ENCODE measurements at regions of chr9 and their contacts with region 1.

Region 1: DNA sequence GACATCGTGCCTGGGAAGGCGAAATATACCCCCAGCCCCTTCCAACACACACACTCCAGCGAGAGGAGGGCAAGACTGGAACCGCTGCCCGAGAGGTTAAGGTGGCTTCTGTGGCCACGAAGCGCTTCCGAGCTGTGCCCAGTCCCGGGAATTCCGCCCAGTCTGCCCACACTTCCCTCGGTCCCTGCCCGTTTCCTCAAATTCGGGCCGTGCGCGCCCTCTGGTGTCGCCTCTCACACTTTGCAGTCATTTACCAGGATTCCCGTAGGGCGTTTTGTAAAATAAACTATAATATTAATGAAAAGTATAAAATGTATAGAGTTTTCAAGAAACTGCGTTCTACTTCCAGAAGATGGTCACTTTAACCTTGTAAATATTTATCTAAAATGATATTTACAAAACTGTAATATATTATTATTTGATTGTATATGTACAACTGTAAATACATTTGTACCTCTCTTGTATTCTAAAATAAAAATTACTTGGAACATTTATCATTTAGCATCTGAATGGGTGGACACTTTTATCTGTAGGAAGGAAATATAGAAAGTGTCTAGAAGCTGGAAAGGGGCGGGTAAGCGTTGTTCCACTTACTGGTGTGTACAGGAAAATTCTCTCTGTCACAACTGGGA is 11.0 kb upstream of the EXOSC2 start:
- DNase-seq: peak; percentile 68
- ATAC-seq: no peak
- H3K4me3 Mint-ChIP-seq: peak overlapping the region; percentile 69
- H3K27ac Mint-ChIP-seq: no peak overlapping the region
- H3K4me1 Mint-ChIP-seq: peaks cover 6% of the 10 kb centered on the region
- H3K27me3 Mint-ChIP-seq: peaks cover 33% of the 10 kb centered on the region

Region 2: DNA sequence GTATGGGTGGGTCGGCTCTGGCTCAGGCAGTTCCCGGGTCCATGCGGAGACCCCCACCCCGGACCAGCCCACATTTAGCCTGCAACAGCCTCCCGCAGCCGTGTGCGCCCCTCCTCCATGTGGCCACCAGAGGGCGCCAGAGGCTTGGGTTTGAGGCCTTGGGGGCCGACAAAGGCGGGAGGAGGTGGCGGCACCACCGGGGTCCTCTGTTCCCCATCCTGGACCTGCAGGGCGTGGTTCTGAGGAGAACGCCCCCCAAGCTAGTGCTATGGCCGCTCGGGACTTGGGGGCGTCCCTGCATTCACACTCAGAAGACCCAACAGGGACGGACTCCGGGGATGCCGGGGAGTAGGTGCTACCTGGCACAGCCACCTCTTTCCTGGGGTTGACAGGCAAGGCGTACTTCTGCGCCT is 221.4 kb before region 1 on chr9:
- CTCF ChIA-PET with region 1: interaction called, 135 read pairs
- DNase-seq: peak; percentile 73
- ATAC-seq: peak; percentile 78
- H3K4me3 Mint-ChIP-seq: no peak overlapping the region
- H3K27ac Mint-ChIP-seq: no peak overlapping the region
- H3K4me1 Mint-ChIP-seq: no peaks in the 10 kb centered on the region
- H3K27me3 Mint-ChIP-seq: peaks cover 12% of the 10 kb centered on the region

Region 3: DNA sequence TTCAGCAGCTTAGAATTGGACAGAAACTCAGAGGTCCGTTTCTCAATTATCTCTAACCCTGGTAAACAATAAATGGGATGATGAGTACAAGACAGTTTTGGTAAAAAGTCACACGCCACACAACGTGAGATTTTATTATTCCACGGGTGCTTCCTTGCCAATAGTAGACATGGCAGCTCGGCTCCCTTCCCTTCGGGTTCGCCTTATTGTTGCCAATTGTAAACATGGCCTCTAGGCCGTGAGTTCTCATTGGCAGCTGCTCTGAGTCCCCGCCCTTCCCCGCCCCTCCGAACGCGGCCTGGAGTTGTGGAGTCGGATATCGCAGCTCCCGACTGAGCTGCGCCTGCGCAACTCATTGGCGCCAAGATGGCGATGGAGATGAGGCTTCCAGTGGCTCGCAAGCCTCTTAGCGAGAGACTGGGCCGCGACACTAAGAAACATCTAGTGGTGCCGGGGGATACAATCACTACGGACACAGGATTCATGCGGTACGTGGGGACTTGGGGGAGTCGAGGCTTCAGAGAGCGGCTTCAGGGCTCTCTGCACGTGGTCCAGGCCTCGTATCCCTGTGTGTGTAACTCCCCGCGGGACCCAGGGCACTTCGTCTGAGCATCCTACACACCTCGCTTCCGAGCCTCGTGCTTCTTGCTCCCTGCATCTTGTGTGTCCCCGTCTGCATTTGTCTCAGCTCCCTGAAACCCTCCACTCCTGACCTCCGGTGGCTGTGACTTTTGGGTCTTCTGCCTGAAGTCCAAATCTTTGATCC is 11.0 kb after region 1 on chr9 and contains the start of gene EXOSC2:
- CTCF ChIA-PET with region 1: interaction called, 30 read pairs
- DNase-seq: peak; percentile 99
- ATAC-seq: peak; percentile 99
- H3K4me3 Mint-ChIP-seq: peak within 1 kb of the TSS; percentile 96
- H3K27ac Mint-ChIP-seq: peak within 1 kb of the TSS; percentile 92
- H3K4me1 Mint-ChIP-seq: peaks cover 56% of the 10 kb centered on the region
- H3K27me3 Mint-ChIP-seq: no peaks in the 10 kb centered on the region
- total RNA-seq, gene EXOSC2: 69.9 to 81.3 TPM

Measured in activated CD8-positive, alpha-beta memory T cell treated with anti-CD3 and anti-CD28 coated beads, Interleukin-2, amount 10 ng/mL, durations not matched to agents 7 days and 5 days (primary cell).